ENCODE measurements at regions of chr20 and their contacts with region 1.

Region 1: GRCh38 chr20:25399037-25399430 is 8.4 kb upstream of the ABHD12 start:
- DNase-seq: peak in 4 of 14 experiments; percentile 20 to 72 (median 67)
- ATAC-seq: no peak
- H3K4me3 ChIP-seq: no peak overlapping the region
- H3K4me3 Mint-ChIP-seq: no peak overlapping the region
- H3K27ac ChIP-seq: no peak overlapping the region
- H3K27ac Mint-ChIP-seq: no peak overlapping the region
- H3K4me1 ChIP-seq: no peaks in the 10 kb centered on the region
- H3K4me1 Mint-ChIP-seq: no peaks in the 10 kb centered on the region
- H3K27me3 ChIP-seq: no peaks in the 10 kb centered on the region
- H3K27me3 Mint-ChIP-seq: peaks cover 9% of the 10 kb centered on the region
- CTCF ChIP-seq: peak; percentile 66

Region 2: GRCh38 chr20:25065625-25066338 is 333.3 kb before region 1 on chr20:
- CTCF ChIA-PET with region 1: no interaction called
- POLR2A ChIA-PET with region 1: no interaction called
- intact Hi-C with region 1: loop called in 1 of 2 experiments (anchors 5 kb)
- DNase-seq: peak; percentile 55 to 85 (median 64)
- ATAC-seq: peak; percentile 69
- H3K4me3 ChIP-seq: no peak overlapping the region
- H3K4me3 Mint-ChIP-seq: no peak overlapping the region
- H3K27ac ChIP-seq: no peak overlapping the region
- H3K27ac Mint-ChIP-seq: no peak overlapping the region
- H3K4me1 ChIP-seq: peaks cover 6% of the 10 kb centered on the region
- H3K4me1 Mint-ChIP-seq: peaks cover 7% of the 10 kb centered on the region
- H3K27me3 ChIP-seq: peaks cover 6 to 13% of the 10 kb centered on the region in 2 experiments
- H3K27me3 Mint-ChIP-seq: peaks cover 26% of the 10 kb centered on the region
- CTCF ChIP-seq: peak; percentile 75

Region 3: DNA sequence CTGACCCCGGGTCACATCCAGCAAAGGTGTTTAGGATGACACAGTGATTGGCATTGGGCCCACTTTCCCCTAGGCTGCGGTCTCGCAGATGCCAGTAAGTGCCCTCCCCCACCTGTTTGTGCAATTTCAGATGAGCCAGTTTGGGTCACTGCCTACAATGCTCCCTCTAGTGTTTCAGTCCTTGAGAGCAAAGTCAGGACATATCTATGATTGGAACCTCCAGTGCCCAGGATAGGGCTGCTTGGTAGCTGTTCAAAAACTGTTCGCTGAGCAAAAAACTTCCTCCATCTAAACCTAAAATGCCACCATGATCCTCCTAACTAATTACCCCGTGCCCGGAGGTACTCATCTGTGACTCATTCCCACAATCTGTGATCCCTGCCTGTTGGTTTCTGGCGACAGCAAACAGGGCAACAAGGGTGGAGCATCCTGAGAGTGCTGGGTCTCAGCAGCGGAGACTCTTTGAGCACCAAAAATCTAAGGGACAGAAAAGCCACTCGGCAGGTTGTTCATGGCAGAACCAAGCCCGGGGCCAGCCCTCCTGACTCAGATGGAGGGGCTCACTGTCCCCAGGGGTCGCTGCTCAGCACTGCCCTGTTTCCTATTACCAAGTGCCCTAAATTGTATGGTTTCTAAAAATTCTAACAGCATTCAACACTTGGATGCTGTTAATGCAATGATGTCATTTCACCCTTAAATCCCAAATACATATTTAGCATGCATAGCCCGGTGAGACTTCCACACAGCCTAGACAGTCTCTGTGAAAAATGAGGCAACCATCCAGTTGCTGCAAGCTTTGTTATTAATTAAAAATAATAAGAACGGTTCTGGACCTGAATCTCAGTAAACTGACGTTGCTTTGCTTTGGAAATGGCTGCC is 322.1 kb before region 1 on chr20:
- CTCF ChIA-PET with region 1: no interaction called
- POLR2A ChIA-PET with region 1: no interaction called
- intact Hi-C with region 1: no loop called
- DNase-seq: peak in 3 of 14 experiments; percentile 17 to 52 (median 42)
- ATAC-seq: peak; percentile 46
- H3K4me3 ChIP-seq: no peak overlapping the region
- H3K4me3 Mint-ChIP-seq: no peak overlapping the region
- H3K27ac ChIP-seq: no peak overlapping the region
- H3K27ac Mint-ChIP-seq: no peak overlapping the region
- H3K4me1 ChIP-seq: peaks cover 18% of the 10 kb centered on the region
- H3K4me1 Mint-ChIP-seq: peaks cover 6% of the 10 kb centered on the region
- H3K27me3 ChIP-seq: peaks cover 62 to 90% of the 10 kb centered on the region in 2 experiments
- H3K27me3 Mint-ChIP-seq: peaks cover 84% of the 10 kb centered on the region
- CTCF ChIP-seq: no peak

Region 4: DNA sequence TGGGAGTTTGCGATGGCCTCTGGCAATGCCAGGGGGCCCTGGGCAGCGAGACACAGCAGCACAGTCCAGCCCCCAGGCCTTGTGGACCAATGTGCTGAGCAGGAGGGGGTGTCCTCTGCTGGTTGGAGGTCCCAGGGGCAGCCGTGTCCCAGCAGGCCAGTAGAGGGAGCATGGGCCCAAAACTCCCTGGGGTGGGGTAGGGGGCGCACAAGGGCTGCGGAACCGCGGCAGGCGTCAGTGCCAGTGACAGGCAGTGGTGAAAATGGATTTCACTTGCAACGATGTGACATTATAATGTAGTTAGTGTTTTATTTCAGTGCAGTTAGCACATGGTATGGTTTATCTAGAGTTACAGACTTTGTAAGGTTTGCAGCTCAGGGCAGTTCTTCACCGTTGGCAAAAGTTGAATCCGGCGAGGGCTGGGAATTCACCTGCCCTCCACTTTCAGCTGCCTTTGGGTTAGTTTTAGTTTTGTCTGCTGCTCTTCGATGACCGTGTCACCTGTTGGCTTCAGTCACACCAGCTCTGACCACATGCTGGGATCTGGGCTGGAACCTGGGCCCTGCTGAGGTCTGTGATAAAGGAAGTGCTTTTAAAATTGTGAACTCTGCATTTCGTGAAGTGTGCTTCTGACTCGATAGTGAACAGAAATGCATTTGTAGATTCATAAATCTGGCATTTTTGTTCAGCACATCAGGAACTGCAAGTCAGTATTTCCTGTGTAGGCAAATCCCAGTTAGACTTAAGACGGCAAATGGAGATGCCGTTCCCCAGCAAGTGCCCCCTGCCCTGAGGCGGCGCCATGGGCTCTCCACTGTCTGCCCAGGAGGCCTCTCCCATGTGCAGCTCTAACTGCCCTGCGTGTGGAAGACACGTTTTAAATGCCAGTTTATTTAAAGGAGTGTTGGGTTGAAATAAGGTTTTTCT is 104.3 kb before region 1 on chr20:
- CTCF ChIA-PET with region 1: interaction called, 15 read pairs
- POLR2A ChIA-PET with region 1: no interaction called
- intact Hi-C with region 1: loop called (anchors 1 kb)
- DNase-seq: peak; percentile 37 to 79 (median 59)
- ATAC-seq: peak; percentile 84
- H3K4me3 ChIP-seq: no peak overlapping the region
- H3K4me3 Mint-ChIP-seq: no peak overlapping the region
- H3K27ac ChIP-seq: no peak overlapping the region
- H3K27ac Mint-ChIP-seq: peak overlapping the region; percentile 39
- H3K4me1 ChIP-seq: peaks cover 5% of the 10 kb centered on the region
- H3K4me1 Mint-ChIP-seq: no peaks in the 10 kb centered on the region
- H3K27me3 ChIP-seq: no peaks in the 10 kb centered on the region
- H3K27me3 Mint-ChIP-seq: no peaks in the 10 kb centered on the region
- CTCF ChIP-seq: peak; percentile 83

Region 5: GRCh38 chr20:25310268-25310920 is 88.6 kb before region 1 on chr20:
- CTCF ChIA-PET with region 1: no interaction called
- POLR2A ChIA-PET with region 1: no interaction called
- intact Hi-C with region 1: loop called in 1 of 2 experiments (anchors 1 kb)
- DNase-seq: peak in 12 of 14 experiments; percentile 15 to 71 (median 42)
- ATAC-seq: peak; percentile 85
- H3K4me3 ChIP-seq: peak overlapping the region; percentile 32
- H3K4me3 Mint-ChIP-seq: peak overlapping the region; percentile 65
- H3K27ac ChIP-seq: peak overlapping the region in 1 of 2 donors; percentile 22
- H3K27ac Mint-ChIP-seq: peak overlapping the region; percentile 73
- H3K4me1 ChIP-seq: peaks cover 21% of the 10 kb centered on the region
- H3K4me1 Mint-ChIP-seq: peaks cover 16% of the 10 kb centered on the region
- H3K27me3 ChIP-seq: no peaks in the 10 kb centered on the region
- H3K27me3 Mint-ChIP-seq: no peaks in the 10 kb centered on the region
- CTCF ChIP-seq: no peak